Activated B cell treated with CpG ODN at 0.5 μM for 24 hours (primary cell): ENCODE measurements at regions of chr1 and their contacts with region 1.

Region 1: DNA sequence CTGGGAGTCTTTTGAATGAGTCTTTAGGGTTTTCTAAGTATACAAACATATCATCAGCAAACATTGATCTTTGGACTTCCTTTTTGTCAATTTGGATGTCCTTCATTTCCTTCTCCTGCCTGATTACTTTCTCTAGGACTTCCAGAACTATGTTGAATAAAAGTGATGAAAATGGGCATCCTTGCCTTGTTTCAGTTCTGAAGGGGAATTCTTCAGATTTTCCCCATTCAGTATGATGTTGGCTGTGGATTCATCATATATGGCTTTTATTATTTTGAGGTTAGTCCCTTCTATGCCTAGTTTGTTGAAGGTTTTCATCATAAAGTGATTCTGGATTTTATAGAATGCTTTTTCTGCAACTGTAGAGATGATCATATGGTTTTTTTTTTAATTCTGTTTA is 42.0 kb downstream of the KMO start:
- DNase-seq: no peak
- ATAC-seq: no peak
- H3K4me3 Mint-ChIP-seq: no peak overlapping the region
- H3K27ac Mint-ChIP-seq: peak overlapping the region; percentile 68
- H3K4me1 Mint-ChIP-seq: peaks cover 34% of the 10 kb centered on the region
- H3K27me3 Mint-ChIP-seq: no peaks in the 10 kb centered on the region
- CTCF ChIP-seq: no peak

Region 2: GRCh38 chr1:241352401-241352800 is 221.8 kb before region 1 on chr1:
- CTCF ChIA-PET with region 1: no interaction called
- POLR2A ChIA-PET with region 1: no interaction called
- intact Hi-C with region 1: no loop called
- DNase-seq: no peak
- ATAC-seq: no peak
- H3K4me3 Mint-ChIP-seq: no peak overlapping the region
- H3K27ac Mint-ChIP-seq: no peak overlapping the region
- H3K4me1 Mint-ChIP-seq: peaks cover 7% of the 10 kb centered on the region
- H3K27me3 Mint-ChIP-seq: peaks cover 24% of the 10 kb centered on the region
- CTCF ChIP-seq: no peak

Region 3: GRCh38 chr1:241592273-241592958 is 18.3 kb after region 1 on chr1:
- CTCF ChIA-PET with region 1: no interaction called
- POLR2A ChIA-PET with region 1: no interaction called
- intact Hi-C with region 1: loop called (anchors 2 kb)
- DNase-seq: no peak
- ATAC-seq: peak; percentile 54
- H3K4me3 Mint-ChIP-seq: no peak overlapping the region
- H3K27ac Mint-ChIP-seq: peak overlapping the region; percentile 75
- H3K4me1 Mint-ChIP-seq: peaks cover 42% of the 10 kb centered on the region
- H3K27me3 Mint-ChIP-seq: no peaks in the 10 kb centered on the region
- CTCF ChIP-seq: no peak